ENCODE measurements at regions of chr19 and their contacts with region 1.

Region 1: GRCh38 chr19:3333662-3334061 is 32.7 kb upstream of the NFIC start:
- DNase-seq: no peak
- ATAC-seq: no peak
- H3K4me3 ChIP-seq: no peak overlapping the region
- H3K27ac ChIP-seq: no peak overlapping the region
- H3K4me1 ChIP-seq: peaks cover 24% of the 10 kb centered on the region
- H3K27me3 ChIP-seq: no peaks in the 10 kb centered on the region; the same call in 1 of the 2 replicates
- CTCF ChIP-seq: no peak
- POLR2A ChIP-seq: no peak
- RAD21 ChIP-seq: no peak

Region 2: DNA sequence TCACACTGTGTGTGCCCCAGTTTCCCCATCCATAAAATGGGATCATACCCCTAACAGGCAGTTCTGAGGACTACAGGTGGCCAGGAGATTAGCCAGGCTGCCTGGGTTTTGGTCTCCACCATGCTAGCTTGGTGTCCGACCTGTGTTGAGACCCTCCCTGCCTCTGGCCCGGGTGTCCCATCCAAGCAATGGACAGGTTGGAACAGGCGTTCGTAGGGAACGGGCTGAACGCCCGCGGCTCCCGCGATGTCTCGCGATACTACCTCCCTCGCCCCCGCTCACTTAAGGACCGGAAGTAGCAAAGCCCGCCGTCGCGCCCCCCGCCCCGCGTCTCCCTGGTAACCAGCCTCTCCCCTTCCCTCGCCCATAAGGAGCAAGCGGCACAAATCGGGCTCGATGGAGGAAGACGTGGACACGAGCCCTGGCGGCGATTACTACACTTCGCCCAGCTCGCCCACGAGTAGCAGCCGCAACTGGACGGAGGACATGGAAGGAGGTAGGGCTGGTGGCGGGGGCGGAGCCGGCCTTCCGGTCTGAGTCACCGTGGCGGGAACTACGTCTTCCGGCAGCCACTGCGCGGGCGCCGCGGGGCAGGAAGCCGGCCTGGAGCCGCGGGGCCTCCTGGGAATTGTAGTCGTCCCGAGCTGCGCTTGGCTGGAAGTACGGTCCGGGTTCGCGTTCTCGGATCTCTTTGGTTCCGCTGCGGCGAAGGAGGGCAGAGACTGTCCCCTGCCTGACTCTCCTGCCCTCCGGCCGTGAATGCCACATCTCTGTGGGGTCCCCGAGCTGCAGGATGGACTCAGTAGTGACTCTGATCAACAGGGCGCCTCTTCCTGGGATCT is 101.3 kb after region 1 on chr19:
- CTCF ChIA-PET with region 1: interaction called, 3 read pairs
- POLR2A ChIA-PET with region 1: no interaction called
- dilution Hi-C with region 1: no loop called
- in situ Hi-C with region 1: loop called (anchors 5 kb)
- intact Hi-C with region 1: no loop called
- DNase-seq: peak; percentile 93
- ATAC-seq: peak; percentile 97
- H3K4me3 ChIP-seq: peak overlapping the region; percentile 51
- H3K27ac ChIP-seq: peak overlapping the region; percentile 98
- H3K4me1 ChIP-seq: peaks cover 8% of the 10 kb centered on the region
- H3K27me3 ChIP-seq: no peaks in the 10 kb centered on the region
- CTCF ChIP-seq: no peak
- POLR2A ChIP-seq: no peak
- RAD21 ChIP-seq: no peak